CD8-positive, alpha-beta T cell (primary cell): ENCODE measurements at regions of chr22 and their contacts with region 1.

Region 1: DNA sequence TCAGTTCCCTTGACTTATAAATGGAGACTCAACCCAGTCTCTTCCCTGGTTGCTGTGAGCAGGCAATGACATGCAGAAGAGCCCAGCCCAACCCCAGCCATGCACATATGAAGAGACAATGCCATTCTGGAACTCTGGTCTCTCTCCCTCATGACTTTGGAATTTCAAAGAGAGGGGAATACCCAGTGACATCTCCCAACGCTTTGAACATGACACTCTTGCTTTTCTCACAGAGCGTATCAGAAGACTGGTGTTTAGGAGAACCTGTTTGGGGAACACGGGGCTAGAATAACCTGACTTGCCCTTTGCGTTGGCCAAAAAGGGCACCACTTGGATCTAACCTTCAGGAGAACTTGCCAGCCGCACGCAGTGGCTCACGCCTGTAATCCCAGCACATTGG is 12.9 kb downstream of the RANGAP1 start:
- DNase-seq: no peak
- ATAC-seq: no peak
- H3K4me3 ChIP-seq: no peak overlapping the region
- H3K4me3 Mint-ChIP-seq: no peak overlapping the region
- H3K27ac ChIP-seq: no peak overlapping the region
- H3K27ac Mint-ChIP-seq: no peak overlapping the region
- H3K4me1 ChIP-seq: no peaks in the 10 kb centered on the region
- H3K4me1 Mint-ChIP-seq: peaks cover 3% of the 10 kb centered on the region
- H3K27me3 ChIP-seq: no peaks in the 10 kb centered on the region
- H3K27me3 Mint-ChIP-seq: no peaks in the 10 kb centered on the region
- CTCF ChIP-seq: no peak

Region 2: GRCh38 chr22:41256254-41256897 is 16.8 kb before region 1 on chr22:
- CTCF ChIA-PET with region 1: no interaction called
- POLR2A ChIA-PET with region 1: no interaction called
- intact Hi-C with region 1: loop called in 1 of 2 experiments (anchors 1 kb)
- DNase-seq: no peak
- ATAC-seq: no peak
- H3K4me3 ChIP-seq: no peak overlapping the region
- H3K4me3 Mint-ChIP-seq: no peak overlapping the region
- H3K27ac ChIP-seq: no peak overlapping the region
- H3K27ac Mint-ChIP-seq: no peak overlapping the region
- H3K4me1 ChIP-seq: no peaks in the 10 kb centered on the region
- H3K4me1 Mint-ChIP-seq: no peaks in the 10 kb centered on the region
- H3K27me3 ChIP-seq: no peaks in the 10 kb centered on the region
- H3K27me3 Mint-ChIP-seq: no peaks in the 10 kb centered on the region
- CTCF ChIP-seq: no peak